PC-3 (cell line): ENCODE measurements at regions of chr2 and their contacts with region 1.

Region 1: GRCh38 chr2:188512456-188512855 is 220.8 kb downstream of the GULP1 start:
- DNase-seq: peak; percentile 65
- ATAC-seq: peak; percentile 71
- H3K4me3 ChIP-seq: no peak overlapping the region
- H3K27ac ChIP-seq: no peak overlapping the region
- H3K4me1 ChIP-seq: no peaks in the 10 kb centered on the region
- H3K27me3 ChIP-seq: no peaks in the 10 kb centered on the region
- CTCF ChIP-seq: peak; percentile 82

Region 2: DNA sequence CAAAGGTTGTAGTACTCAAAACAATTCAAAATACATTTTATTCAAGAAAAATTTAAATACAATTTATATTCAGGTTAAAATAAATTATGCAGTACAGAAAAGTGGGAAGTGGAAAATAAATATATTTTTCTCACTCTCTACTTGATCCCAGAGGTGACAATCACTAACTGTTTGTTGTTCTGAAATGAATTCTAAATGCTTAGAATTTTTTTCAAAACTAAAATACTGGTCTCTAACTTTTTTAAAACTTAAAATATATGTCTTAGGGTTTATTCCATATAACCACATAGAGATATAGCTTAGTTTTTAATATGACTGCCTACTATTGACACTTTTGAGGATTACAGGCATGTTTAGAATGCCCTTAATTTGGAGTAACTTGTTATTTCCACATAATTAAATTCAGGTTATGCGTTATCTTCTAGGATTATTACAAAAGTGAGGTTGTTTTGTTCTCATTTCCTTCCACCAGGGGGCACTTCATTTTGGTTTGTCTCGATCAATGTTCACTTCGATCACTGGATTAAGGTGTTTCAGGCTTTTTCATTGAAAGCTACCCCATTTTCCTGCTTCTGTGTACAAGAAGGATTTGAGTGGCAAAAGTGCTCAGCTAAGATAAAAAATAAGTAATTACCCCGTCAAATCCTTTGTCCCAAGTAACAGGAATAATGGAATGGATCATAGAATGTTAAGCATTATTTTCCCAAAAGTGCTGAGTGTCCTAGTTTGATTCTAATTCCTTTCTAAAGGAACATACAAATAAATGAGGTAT is 931.1 kb before region 1 on chr2:
- CTCF ChIA-PET with region 1: no interaction called
- POLR2A ChIA-PET with region 1: no interaction called
- intact Hi-C with region 1: loop called (anchors 1 kb)
- DNase-seq: peak; percentile 75
- ATAC-seq: peak; percentile 37
- H3K4me3 ChIP-seq: peak overlapping the region; percentile 35
- H3K27ac ChIP-seq: peak overlapping the region; percentile 72
- H3K4me1 ChIP-seq: peaks cover 23% of the 10 kb centered on the region
- H3K27me3 ChIP-seq: no peaks in the 10 kb centered on the region
- CTCF ChIP-seq: peak; percentile 82

Region 3: DNA sequence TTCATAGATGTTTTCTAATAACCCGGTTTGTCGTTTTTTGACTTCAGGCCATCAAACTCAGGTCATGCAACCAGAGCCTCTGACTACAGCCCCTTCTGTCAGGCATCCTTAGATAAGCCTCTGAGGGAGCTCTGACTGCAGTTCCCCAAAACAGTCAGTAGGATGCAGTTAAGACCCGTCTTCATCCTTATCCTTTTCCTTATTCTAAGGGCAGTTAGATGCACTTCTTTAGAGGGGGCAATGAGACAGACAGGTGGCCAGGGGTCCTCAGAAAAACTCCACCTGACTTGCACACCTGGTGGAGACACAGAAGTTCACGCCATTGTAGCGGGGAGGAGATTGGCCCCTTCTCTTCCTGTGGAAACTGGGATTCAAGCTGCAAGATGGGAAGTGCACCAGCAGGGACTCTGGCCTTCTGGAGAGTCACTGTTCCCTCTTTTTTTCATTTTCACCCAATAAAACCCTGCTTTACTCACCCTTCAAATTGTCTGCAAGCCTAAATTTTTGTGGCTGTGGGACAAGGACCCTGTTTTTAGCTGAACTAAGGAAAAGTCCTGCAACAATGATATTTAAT is 853.4 kb before region 1 on chr2:
- CTCF ChIA-PET with region 1: no interaction called
- POLR2A ChIA-PET with region 1: no interaction called
- intact Hi-C with region 1: loop called (anchors 2 kb)
- DNase-seq: peak; percentile 51
- ATAC-seq: peak; percentile 86
- H3K4me3 ChIP-seq: no peak overlapping the region
- H3K27ac ChIP-seq: no peak overlapping the region
- H3K4me1 ChIP-seq: no peaks in the 10 kb centered on the region
- H3K27me3 ChIP-seq: 0 out of 2 replicates have a peak, but pooled peaks cover 4% of the 10 kb centered on the region
- CTCF ChIP-seq: peak; percentile 63

Region 4: DNA sequence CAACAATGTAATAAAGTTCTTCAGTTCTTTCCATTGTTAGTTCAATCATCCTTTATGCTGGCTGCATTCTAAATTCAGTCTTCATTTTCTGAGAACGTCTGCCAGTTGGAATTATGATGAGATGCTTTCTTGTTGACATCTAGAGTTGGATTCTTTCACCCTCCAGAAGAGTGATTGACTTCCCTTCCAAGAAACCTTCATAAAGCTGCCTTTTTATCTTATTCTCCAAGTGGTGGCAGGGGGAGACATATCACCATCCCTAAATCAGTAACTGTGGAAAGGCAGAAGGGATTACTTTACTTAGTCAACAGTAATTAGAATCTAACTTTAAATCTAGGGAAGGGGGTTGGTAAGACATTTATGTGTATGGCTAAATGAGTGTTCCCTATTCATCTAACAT is 307.6 kb before region 1 on chr2:
- CTCF ChIA-PET with region 1: no interaction called
- POLR2A ChIA-PET with region 1: no interaction called
- intact Hi-C with region 1: loop called (anchors 5 kb)
- DNase-seq: no peak
- ATAC-seq: no peak
- H3K4me3 ChIP-seq: no peak overlapping the region
- H3K27ac ChIP-seq: no peak overlapping the region
- H3K4me1 ChIP-seq: peaks cover 2% of the 10 kb centered on the region
- H3K27me3 ChIP-seq: no peaks in the 10 kb centered on the region
- CTCF ChIP-seq: no peak; the same call in 1 of the 2 replicates

Region 5: DNA sequence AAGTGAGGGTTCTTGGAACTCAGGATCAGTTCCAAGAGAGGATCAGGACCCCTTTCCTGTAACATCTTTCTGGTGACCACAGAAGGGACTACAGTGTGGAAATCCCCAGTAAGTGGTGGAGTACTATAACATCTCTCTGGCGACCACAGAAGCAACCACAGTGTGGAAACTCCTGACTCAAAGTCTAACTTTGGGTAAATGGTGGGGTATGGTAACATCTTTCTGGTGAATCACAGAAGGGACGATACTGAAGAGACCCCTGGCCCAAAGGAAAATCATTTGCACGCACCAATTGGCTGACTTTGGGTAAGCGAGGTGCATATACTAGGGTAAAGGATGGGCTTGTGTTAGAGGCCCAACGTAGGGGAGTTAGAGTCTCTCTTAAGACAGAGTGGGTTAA is 277.1 kb before region 1 on chr2:
- CTCF ChIA-PET with region 1: no interaction called
- POLR2A ChIA-PET with region 1: no interaction called
- intact Hi-C with region 1: no loop called
- DNase-seq: no peak
- ATAC-seq: no peak
- H3K4me3 ChIP-seq: no peak overlapping the region
- H3K27ac ChIP-seq: no peak overlapping the region
- H3K4me1 ChIP-seq: no peaks in the 10 kb centered on the region
- H3K27me3 ChIP-seq: no peaks in the 10 kb centered on the region
- CTCF ChIP-seq: no peak

Region 6: GRCh38 chr2:188983427-188984064 is 471.1 kb after region 1 on chr2:
- CTCF ChIA-PET with region 1: interaction called, 14 read pairs
- POLR2A ChIA-PET with region 1: no interaction called
- intact Hi-C with region 1: no loop called
- DNase-seq: peak; percentile 72
- ATAC-seq: no peak
- H3K4me3 ChIP-seq: no peak overlapping the region
- H3K27ac ChIP-seq: no peak overlapping the region
- H3K4me1 ChIP-seq: no peaks in the 10 kb centered on the region
- H3K27me3 ChIP-seq: no peaks in the 10 kb centered on the region
- CTCF ChIP-seq: peak; percentile 76